AG04449 (cell line): ENCODE measurements at regions of chr13 and their contacts with region 1.

Region 1: GRCh38 chr13:35978603-35979316 is 152.4 kb downstream of the DCLK1 start:
- DNase-seq: no peak
- H3K4me3 ChIP-seq: no peak overlapping the region
- CTCF ChIP-seq: peak; percentile 46

Region 2: GRCh38 chr13:35961461-35962220 is 17.1 kb before region 1 on chr13:
- CTCF ChIA-PET with region 1: interaction called, 12 read pairs
- POLR2A ChIA-PET with region 1: no interaction called
- DNase-seq: no peak
- H3K4me3 ChIP-seq: no peak overlapping the region
- CTCF ChIP-seq: no peak